Calu3 (cell line): ENCODE measurements at regions of chr2 and their contacts with region 1.

Region 1: GRCh38 chr2:34012715-34013302 is 413.7 kb upstream of the FAM98A start:
- DNase-seq: peak; percentile 52
- H3K4me3 Mint-ChIP-seq: no peak overlapping the region
- H3K27ac Mint-ChIP-seq: no peak overlapping the region
- H3K4me1 Mint-ChIP-seq: no peaks in the 10 kb centered on the region
- H3K27me3 Mint-ChIP-seq: no peaks in the 10 kb centered on the region
- CTCF ChIP-seq: peak; percentile 45

Region 2: DNA sequence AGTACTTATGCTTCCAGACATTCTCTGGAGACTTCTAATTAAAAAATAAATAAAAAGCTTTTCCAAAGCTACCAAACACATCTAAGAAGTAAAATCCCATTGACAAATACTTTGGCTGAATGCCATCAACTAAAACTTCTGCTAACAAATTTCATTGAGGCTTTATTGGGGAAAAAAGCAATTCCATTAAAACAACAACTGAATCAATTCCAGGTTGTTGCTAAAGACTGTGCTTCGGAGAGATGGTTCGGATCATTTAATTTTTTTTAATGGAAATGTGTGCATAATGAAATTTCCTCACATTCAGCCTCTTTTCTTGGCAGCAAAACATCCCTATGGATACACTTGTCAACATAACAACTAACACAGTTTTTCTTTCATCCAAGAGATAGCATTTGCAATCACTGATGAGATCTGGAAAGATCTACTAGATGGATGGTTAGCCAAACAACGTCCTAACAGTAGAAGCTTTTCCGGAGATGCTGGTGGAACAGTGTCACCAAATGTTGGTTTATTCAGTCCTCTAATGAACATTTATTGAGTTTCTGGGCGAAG is 32.4 kb after region 1 on chr2:
- CTCF ChIA-PET with region 1: no interaction called
- intact Hi-C with region 1: no loop called
- DNase-seq: no peak
- H3K4me3 Mint-ChIP-seq: no peak overlapping the region
- H3K27ac Mint-ChIP-seq: no peak overlapping the region
- H3K4me1 Mint-ChIP-seq: no peaks in the 10 kb centered on the region
- H3K27me3 Mint-ChIP-seq: no peaks in the 10 kb centered on the region
- CTCF ChIP-seq: no peak

Region 3: DNA sequence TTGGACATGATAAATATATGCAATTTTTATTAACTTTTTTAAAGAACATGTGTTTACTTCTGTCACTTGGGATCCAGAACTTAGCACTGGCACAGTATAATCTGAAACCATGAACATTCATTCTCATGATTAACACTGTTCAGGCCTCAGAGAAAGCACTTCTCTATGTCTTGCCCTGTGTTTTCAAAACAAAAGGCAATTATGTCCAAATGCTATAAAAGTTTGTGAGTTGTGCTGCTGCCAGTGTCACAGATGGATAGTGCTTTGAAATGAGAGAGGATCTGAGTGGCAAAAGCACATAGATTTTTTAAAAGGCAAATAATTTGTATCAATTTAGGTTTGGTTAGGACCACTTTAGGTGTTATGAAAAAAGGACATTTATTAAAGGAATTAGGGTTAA is 56.8 kb after region 1 on chr2:
- CTCF ChIA-PET with region 1: no interaction called
- intact Hi-C with region 1: no loop called
- DNase-seq: no peak
- H3K4me3 Mint-ChIP-seq: no peak overlapping the region
- H3K27ac Mint-ChIP-seq: no peak overlapping the region
- H3K4me1 Mint-ChIP-seq: no peaks in the 10 kb centered on the region
- H3K27me3 Mint-ChIP-seq: no peaks in the 10 kb centered on the region
- CTCF ChIP-seq: no peak

Region 4: DNA sequence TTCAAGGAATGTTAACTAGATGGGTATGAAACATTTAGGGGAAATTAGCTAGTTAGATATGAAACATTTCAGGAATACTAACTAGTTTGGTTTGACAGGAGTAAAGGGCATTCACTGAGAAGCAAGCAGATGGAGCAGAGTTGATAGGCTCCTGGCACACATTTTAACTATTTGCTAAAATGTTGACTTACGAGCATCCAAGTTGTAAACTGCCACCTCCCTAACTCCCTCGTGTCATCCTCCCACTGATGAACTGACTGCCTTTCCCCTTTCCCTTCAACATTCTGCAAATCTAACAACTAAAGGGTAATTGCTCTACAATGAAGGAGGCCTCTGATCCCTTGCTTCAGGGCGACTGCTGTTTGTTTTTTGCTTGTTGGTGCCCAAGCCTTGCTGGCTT is 166.7 kb after region 1 on chr2:
- CTCF ChIA-PET with region 1: no interaction called
- intact Hi-C with region 1: no loop called
- DNase-seq: no peak
- H3K4me3 Mint-ChIP-seq: no peak overlapping the region
- H3K27ac Mint-ChIP-seq: no peak overlapping the region
- H3K4me1 Mint-ChIP-seq: no peaks in the 10 kb centered on the region
- H3K27me3 Mint-ChIP-seq: no peaks in the 10 kb centered on the region
- CTCF ChIP-seq: no peak

Region 5: DNA sequence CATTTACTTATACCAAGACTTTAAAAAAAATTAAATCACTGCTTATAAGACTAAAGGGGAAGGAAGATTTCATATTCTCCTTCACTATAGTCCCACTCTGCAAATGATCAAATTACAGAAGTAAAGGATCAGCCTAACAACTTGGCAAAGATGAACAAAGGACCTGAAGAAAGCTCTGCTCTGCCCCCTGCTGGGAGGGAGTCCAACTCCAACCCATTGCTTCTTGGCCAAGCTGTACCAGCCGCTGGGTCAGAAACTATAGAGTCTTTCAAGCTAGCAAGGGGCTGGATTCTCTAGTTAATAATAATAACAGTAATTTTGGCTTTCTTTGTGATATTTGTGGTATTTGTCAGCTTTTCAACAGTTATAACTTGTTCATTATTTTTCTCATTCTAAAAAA is 1415.7 kb after region 1 on chr2:
- CTCF ChIA-PET with region 1: no interaction called
- intact Hi-C with region 1: loop called (anchors 10 kb)
- DNase-seq: peak; percentile 40
- H3K4me3 Mint-ChIP-seq: no peak overlapping the region
- H3K27ac Mint-ChIP-seq: no peak overlapping the region
- H3K4me1 Mint-ChIP-seq: no peaks in the 10 kb centered on the region
- H3K27me3 Mint-ChIP-seq: no peaks in the 10 kb centered on the region
- CTCF ChIP-seq: peak; percentile 37